H1 (cell line): ENCODE measurements at regions of chr2 and their contacts with region 1.

Region 1: DNA sequence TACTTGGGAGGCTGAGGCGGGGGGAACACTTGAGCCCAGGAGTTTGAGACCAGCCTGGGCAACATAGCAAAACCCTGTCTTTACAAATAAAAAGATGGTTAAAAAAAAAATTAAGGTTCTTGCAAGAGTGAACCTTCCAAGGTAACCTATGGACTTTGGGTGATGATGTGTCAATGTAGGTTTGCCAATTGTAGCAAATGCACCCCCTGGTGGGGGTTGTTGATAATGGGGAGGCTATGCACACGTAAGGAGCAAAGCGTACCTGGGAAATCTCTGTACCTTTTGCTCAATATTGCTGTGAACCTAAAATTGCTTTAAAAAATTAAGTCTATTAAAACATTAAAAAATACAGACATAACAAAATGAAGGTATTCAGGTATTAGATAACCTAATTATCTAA is 70.4 kb downstream of the CWC22 start:
- DNase-seq: peak; percentile 23 to 77
- H3K4me3 ChIP-seq: no peak overlapping the region
- H3K27ac ChIP-seq: no peak overlapping the region
- H3K4me1 ChIP-seq: peaks cover 0 to 2% (median 0%) of the 10 kb centered on the region in 4 experiments; a peak in 1 of 7 replicates
- H3K27me3 ChIP-seq: peaks cover 0 to 1% (median 0%) of the 10 kb centered on the region in 4 experiments; a peak in 1 of 7 replicates
- CTCF ChIP-seq: peak; percentile 42 to 62 (median 60)
- EP300 ChIP-seq: no peak
- POLR2A ChIP-seq: no peak
- RAD21 ChIP-seq: peak; percentile 60 to 67

Region 2: DNA sequence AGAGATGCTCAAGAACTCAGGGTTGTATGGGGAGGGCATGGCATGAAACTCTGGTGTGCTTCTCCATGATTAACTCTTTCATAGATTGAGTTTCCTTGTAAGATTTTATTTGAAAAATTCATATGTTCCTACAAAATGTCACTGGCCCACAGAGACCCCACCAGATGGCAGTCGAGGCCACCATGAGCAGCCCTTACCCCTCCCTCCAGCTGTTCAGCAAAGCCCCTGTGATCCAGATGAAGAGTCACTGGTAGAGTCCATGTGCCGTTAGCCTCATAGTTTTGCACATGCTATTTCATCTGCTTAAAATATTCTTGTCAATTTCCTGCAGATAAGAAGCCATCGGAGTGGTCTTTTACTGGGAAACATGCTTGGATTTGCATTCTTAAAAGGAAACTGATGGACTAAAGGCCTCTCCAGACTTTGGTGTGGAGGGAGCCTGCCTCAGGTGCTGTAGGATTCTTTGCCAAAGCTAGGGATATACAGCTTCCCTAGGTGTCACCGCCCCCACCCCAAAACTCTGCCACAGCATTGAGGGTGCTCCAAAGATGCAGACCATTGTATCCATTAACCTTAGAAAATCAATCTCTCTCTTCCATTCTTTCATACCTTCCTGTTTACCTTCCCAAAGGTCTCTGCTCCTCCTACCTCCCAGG is 94.0 kb before region 1 on chr2:
- CTCF ChIA-PET with region 1: interaction called, 72 read pairs
- POLR2A ChIA-PET with region 1: no interaction called
- DNase-seq: peak in 1 of 2 experiments; percentile 53
- H3K4me3 ChIP-seq: no peak overlapping the region
- H3K27ac ChIP-seq: no peak overlapping the region
- H3K4me1 ChIP-seq: peaks cover 0 to 3% (median 1%) of the 10 kb centered on the region in 4 experiments; a peak in 3 of 7 replicates
- H3K27me3 ChIP-seq: no peaks in the 10 kb centered on the region
- CTCF ChIP-seq: peak; percentile 59 to 74 (median 62)
- EP300 ChIP-seq: no peak
- POLR2A ChIP-seq: no peak
- RAD21 ChIP-seq: peak; percentile 84 to 85

Region 3: DNA sequence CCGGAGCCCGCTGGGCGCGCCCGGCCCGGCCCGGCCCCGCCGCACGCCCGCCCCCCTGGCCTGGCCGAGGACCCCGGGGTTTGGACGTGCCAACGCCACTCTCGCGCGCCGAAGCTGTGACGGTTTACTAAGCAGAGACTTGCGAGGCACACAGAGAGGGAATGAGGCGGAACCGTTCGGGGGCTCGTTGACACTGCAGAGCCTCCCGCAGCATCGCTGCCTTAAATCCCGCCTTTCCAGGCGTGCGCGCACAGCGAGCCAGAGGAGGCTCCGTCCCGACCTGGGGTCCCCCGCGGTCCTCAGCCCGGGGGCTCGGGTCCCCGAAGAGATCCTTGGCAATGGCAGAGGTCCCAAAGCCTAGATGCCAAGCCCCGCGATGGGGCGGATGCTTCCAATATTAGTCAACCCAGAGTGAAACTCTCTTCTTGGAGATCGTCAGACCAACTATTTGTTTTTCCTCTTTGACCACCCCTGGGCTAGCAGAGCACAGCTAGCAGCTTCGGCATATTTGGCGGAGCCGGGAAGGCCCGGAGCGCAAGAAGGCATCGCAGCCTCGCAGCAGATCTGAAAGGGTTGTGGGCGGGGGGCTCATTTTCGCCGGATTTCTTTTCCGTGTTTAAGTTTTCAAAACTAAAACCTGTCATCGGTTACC is 75.1 kb before region 1 on chr2 and contains the start of gene ZNF385B:
- CTCF ChIA-PET with region 1: interaction called, 13 read pairs
- POLR2A ChIA-PET with region 1: no interaction called
- DNase-seq: peak in 1 of 2 experiments; percentile 15
- H3K4me3 ChIP-seq: peak within 1 kb of the TSS; percentile 76 to 84 (median 80)
- H3K27ac ChIP-seq: no peak within 1 kb of the TSS
- H3K4me1 ChIP-seq: peaks cover 0 to 7% (median 2%) of the 10 kb centered on the region in 4 experiments; a peak in 5 of 7 replicates
- H3K27me3 ChIP-seq: peaks cover 6 to 37% (median 18%) of the 10 kb centered on the region in 4 experiments
- CTCF ChIP-seq: no peak
- EP300 ChIP-seq: no peak
- POLR2A ChIP-seq: no peak
- RAD21 ChIP-seq: no peak
- total RNA-seq, gene ZNF385B: 2.9 and 3.7 TPM in 2 replicates

Region 4: DNA sequence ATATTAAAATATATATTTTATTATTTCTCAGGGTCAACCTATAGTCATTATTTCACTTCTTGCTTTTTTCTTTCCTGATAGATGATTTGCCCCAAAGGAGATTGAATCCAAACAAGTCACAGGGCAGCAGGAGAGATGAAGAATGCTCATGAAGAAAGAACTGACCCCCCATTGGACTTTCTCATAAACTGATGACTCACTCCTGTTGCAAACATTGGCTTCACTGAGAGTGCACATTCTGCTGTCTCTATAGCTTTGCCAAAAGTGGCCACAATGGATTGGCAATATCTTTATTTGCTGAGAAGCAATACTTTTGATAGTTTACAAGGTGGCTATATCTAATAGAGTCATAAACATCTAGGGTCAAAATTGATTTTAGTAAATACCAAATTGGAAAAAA is 19.4 kb before region 1 on chr2:
- CTCF ChIA-PET with region 1: interaction called, 20 read pairs
- POLR2A ChIA-PET with region 1: no interaction called
- DNase-seq: no peak
- H3K4me3 ChIP-seq: no peak overlapping the region
- H3K27ac ChIP-seq: no peak overlapping the region
- H3K4me1 ChIP-seq: no peaks in the 10 kb centered on the region
- H3K27me3 ChIP-seq: no peaks in the 10 kb centered on the region
- CTCF ChIP-seq: no peak
- EP300 ChIP-seq: no peak
- POLR2A ChIP-seq: no peak
- RAD21 ChIP-seq: no peak

Region 5: DNA sequence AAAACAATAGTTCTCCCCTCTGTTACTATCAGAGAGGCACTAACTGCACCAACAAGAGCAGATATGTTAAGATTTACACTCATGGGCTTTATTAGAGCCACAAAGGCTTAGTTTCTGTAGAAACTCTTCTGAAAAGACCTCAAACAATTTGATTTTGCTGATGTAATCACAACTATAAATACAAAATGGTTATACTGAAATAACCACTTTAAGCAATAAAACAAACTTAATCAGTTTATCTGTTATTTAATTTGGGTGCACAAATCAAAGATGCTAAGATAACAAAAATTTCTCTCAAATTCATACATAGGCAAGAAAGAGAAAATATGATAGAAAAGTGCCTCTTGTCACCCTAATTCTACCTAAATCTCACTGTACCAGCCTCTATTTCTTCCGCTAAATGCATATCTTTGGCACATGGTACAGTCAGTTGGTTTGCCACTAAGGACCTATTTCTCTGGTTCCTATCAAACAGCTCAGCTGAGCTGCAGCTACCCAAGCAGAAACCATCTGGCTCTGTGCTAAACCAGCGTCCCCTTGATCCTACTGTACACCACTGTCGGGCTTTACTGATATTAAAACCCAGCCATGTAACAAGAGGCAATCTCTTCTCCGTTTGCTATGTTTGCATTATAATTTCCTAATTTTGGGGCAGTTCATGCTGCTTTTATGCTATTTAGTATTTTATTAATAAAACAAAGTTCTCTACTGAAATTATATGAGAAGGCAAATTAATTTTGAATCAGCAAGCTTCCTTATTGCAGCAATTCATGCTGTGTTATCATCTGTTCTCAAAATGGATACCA is 10.4 kb after region 1 on chr2:
- CTCF ChIA-PET with region 1: interaction called, 36 read pairs
- POLR2A ChIA-PET with region 1: no interaction called
- DNase-seq: no peak
- H3K4me3 ChIP-seq: no peak overlapping the region
- H3K27ac ChIP-seq: no peak overlapping the region
- H3K4me1 ChIP-seq: no peaks in the 10 kb centered on the region
- H3K27me3 ChIP-seq: peaks cover 0 to 1% (median 0%) of the 10 kb centered on the region in 4 experiments; a peak in 1 of 7 replicates
- CTCF ChIP-seq: no peak
- EP300 ChIP-seq: no peak
- POLR2A ChIP-seq: no peak
- RAD21 ChIP-seq: no peak